Activated CD4-positive, alpha-beta memory T cell treated with anti-CD3 and anti-CD28 coated beads, Interleukin-2, amount 10 ng/mL, durations not matched to agents 7 days and 5 days (primary cell): ENCODE measurements at regions of chr14 and their contacts with region 1.

Region 1: GRCh38 chr14:90383075-90383730 is 13.6 kb upstream of the CALM1 start:
- DNase-seq: peak; percentile 99
- H3K4me3 Mint-ChIP-seq: no peak overlapping the region
- H3K27ac Mint-ChIP-seq: no peak overlapping the region
- H3K4me1 Mint-ChIP-seq: peaks cover 20% of the 10 kb centered on the region
- H3K27me3 Mint-ChIP-seq: no peaks in the 10 kb centered on the region

Region 2: GRCh38 chr14:90256354-90257131 is 126.7 kb before region 1 on chr14 and contains the start of gene PSMC1:
- CTCF ChIA-PET with region 1: interaction called, 3 read pairs
- POLR2A ChIA-PET with region 1: interaction called, 39 read pairs
- DNase-seq: peak; percentile 93
- H3K4me3 Mint-ChIP-seq: peak within 1 kb of the TSS; percentile 90
- H3K27ac Mint-ChIP-seq: peak within 1 kb of the TSS; percentile 92
- H3K4me1 Mint-ChIP-seq: peaks cover 32% of the 10 kb centered on the region
- H3K27me3 Mint-ChIP-seq: peaks cover 3% of the 10 kb centered on the region
- total RNA-seq, gene PSMC1: 85.6 to 85.9 TPM

Region 3: GRCh38 chr14:90331497-90332435 is 51.4 kb before region 1 on chr14 and contains the start of gene NRDE2:
- CTCF ChIA-PET with region 1: no interaction called
- POLR2A ChIA-PET with region 1: interaction called, 33 read pairs
- DNase-seq: peak; percentile 96
- H3K4me3 Mint-ChIP-seq: peak within 1 kb of the TSS; percentile 95
- H3K27ac Mint-ChIP-seq: peak within 1 kb of the TSS; percentile 83
- H3K4me1 Mint-ChIP-seq: peaks cover 25% of the 10 kb centered on the region
- H3K27me3 Mint-ChIP-seq: peaks cover 16% of the 10 kb centered on the region
- total RNA-seq, gene NRDE2: 20.3 to 21.7 TPM

Region 4: DNA sequence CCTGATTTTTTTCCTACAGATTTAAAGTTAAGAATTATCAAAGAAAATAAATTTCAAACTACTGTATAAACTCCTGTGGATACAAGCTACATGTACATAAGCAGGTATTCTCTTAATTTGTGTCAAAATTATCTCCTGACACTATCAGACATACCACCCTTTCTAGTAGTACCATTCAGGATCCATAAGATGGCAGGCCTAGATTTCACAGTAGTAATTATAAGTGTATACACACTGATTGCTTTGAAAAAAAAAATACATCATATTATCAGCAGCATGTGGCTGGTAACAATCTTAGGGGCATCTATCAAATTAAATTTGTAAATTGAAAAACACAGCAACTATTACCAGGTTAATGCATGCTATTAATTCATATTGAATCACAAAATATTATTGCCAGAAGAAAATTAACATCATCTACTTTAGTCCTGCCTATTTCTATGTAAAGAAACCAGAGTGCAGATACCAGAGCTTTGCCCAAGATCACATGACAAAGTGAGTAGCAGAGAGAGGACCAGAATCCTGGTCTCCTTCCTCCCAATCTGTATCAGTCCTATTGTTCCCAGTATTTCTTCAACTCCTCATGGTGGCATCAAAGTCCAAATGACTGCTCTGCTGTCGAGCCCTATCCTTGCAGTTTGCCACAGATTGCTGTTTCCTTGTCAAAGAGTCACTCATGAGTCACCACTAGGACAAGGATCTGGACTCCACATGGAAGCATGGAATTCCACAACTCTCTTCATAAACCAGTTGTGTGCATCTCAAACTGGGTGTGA is 14.1 kb before region 1 on chr14:
- CTCF ChIA-PET with region 1: no interaction called
- POLR2A ChIA-PET with region 1: interaction called, 10 read pairs
- DNase-seq: no peak
- H3K4me3 Mint-ChIP-seq: no peak overlapping the region
- H3K27ac Mint-ChIP-seq: no peak overlapping the region
- H3K4me1 Mint-ChIP-seq: no peaks in the 10 kb centered on the region
- H3K27me3 Mint-ChIP-seq: peaks cover 5% of the 10 kb centered on the region